Mucosa of descending colon (tissue), 3 donors: ENCODE measurements at regions of chr2 and their contacts with region 1.

Region 1: GRCh38 chr2:64653349-64654062 is at the start of gene SERTAD2:
- DNase-seq: peak; percentile 89 to 95 (median 92)
- ATAC-seq: peak; percentile 88
- H3K4me3 ChIP-seq: peak within 1 kb of the TSS; percentile 58
- H3K4me1 ChIP-seq: peaks cover 34% of the 10 kb centered on the region
- CTCF ChIP-seq: no peak
- total RNA-seq, gene SERTAD2: 17.3 to 20.6 (median 20.6) TPM

Region 2: DNA sequence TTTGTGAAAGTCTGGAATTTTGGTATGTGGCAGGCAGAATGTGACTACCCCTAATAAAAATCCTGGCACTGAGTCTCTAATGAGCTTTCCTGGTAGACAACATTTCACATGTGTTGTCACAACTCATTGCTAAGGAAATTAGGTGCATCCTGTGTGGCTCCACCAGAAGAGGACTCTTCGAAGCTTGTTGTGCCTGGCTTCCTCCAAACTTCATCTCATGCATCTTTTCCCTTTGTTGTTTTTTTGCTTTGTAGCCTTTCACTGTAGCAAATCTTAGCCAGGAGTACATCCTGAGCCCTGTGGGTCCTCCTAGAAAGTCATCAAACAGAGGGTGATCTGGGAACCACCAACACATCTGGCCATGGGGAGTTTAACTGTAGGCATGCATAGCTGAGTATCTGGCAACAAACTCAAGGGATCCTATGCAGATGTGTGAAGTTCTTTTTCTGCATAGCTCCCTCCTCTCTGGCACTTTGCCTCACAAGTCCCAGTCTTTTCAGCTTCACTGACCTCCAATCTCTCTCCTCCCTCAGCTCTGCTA is 42.3 kb after region 1 on chr2:
- intact Hi-C with region 1: no loop called
- DNase-seq: no peak
- ATAC-seq: no peak
- H3K4me3 ChIP-seq: no peak overlapping the region
- H3K4me1 ChIP-seq: no peaks in the 10 kb centered on the region
- CTCF ChIP-seq: no peak

Region 3: GRCh38 chr2:64750817-64751285 is 97.3 kb after region 1 on chr2:
- intact Hi-C with region 1: loop called (anchors 5 to 10 kb)
- DNase-seq: peak in 2 of 3 donors; percentile 98 to 99
- ATAC-seq: no peak
- H3K4me3 ChIP-seq: peak overlapping the region; percentile 69
- H3K4me1 ChIP-seq: peaks cover 5% of the 10 kb centered on the region
- CTCF ChIP-seq: no peak